GM12878 (cell line): ENCODE measurements at regions of chrX and their contacts with region 1.

Region 1: GRCh38 chrX:53422086-53422860 is at the start of gene SMC1A:
- DNase-seq: peak; percentile 97
- ATAC-seq: peak; percentile 92
- H3K4me3 ChIP-seq: peak within 1 kb of the TSS; percentile 80
- H3K27ac ChIP-seq: peak within 1 kb of the TSS; percentile 98
- H3K4me1 ChIP-seq: peaks cover 6% of the 10 kb centered on the region
- H3K27me3 ChIP-seq: no peaks in the 10 kb centered on the region
- CTCF ChIP-seq: no peak
- EP300 ChIP-seq: no peak
- POLR2A ChIP-seq: peak; percentile 87
- RAD21 ChIP-seq: no peak
- polyA plus RNA-seq, gene SMC1A: 25.6 to 29.6 TPM

Region 2: GRCh38 chrX:52504551-52504950 is 917.7 kb before region 1 on chrX:
- CTCF ChIA-PET with region 1: no interaction called
- POLR2A ChIA-PET with region 1: no interaction called
- RAD21 ChIA-PET with region 1: no interaction called
- SMC1A ChIA-PET with region 1: no interaction called
- in situ Hi-C with region 1: no loop called
- intact Hi-C with region 1: no loop called
- DNase-seq: no peak
- ATAC-seq: no peak
- H3K4me3 ChIP-seq: no peak overlapping the region
- H3K27ac ChIP-seq: no peak overlapping the region
- H3K4me1 ChIP-seq: no peaks in the 10 kb centered on the region
- H3K27me3 ChIP-seq: no peaks in the 10 kb centered on the region; a peak in 1 of 4 replicates
- CTCF ChIP-seq: no peak
- EP300 ChIP-seq: no peak
- POLR2A ChIP-seq: no peak
- RAD21 ChIP-seq: no peak

Region 3: DNA sequence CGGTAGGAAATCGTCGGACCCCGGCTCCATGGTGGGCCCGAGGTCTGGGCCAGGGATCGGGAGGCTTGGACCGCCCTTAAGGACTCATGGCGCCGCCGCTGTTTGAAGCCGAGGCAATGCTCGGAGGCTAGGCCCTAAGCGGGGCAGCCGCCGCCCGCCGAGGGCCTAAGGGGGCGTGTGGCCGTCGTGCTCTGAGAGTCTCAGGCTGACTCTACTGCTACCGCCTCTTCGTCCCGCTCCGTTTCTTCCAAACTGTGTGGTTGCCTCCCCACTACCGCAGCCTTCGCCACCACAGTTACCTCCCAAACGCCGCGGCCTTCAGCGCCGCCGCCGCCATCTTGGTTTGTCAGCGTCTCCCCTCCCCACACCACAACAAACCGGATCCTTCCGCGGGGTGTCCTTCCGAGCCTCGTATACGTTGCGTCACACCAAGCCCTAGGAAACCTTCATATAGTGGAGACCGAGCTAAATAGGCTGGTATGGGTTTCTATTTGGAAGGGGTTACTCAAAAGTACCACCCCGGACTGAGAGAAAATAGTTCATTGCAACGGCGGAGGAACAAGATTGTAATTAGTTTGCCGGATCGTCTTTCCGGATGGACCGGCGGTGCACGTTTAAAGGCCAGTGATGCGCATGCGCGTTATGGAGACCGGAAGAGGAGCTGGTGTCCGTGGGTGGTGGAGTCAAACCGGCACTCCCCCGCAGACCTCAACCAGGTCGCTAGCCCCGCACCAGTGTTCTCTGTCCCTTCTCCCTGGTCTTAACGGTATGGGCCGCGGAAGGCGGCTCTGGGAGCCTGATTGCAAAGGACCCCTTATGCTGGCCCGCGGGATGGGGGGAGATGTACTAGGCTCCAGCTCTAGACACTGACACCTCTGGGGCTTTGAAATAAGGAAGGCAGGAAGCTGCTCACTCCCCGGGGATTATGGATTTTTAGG is 197.1 kb before region 1 on chrX and contains the start of gene KDM5C:
- CTCF ChIA-PET with region 1: no interaction called
- POLR2A ChIA-PET with region 1: interaction called, 3 read pairs
- RAD21 ChIA-PET with region 1: interaction called, 6 read pairs
- SMC1A ChIA-PET with region 1: no interaction called
- in situ Hi-C with region 1: no loop called
- intact Hi-C with region 1: loop called (anchors 5 kb)
- DNase-seq: peak; percentile 79
- ATAC-seq: peak; percentile 87
- H3K4me3 ChIP-seq: peak within 1 kb of the TSS; percentile 96
- H3K27ac ChIP-seq: peak within 1 kb of the TSS; percentile 99
- H3K4me1 ChIP-seq: peaks cover 9% of the 10 kb centered on the region
- H3K27me3 ChIP-seq: no peaks in the 10 kb centered on the region
- CTCF ChIP-seq: no peak
- EP300 ChIP-seq: peak in 1 of 2 experiments; percentile 64; a peak in 2 of 4 replicates
- POLR2A ChIP-seq: peak; percentile 99
- RAD21 ChIP-seq: no peak
- polyA plus RNA-seq, gene KDM5C: 1.5 TPM

Region 4: GRCh38 chrX:53433651-53434639 is 11.7 kb after region 1 on chrX and contains the start of gene HSD17B10:
- CTCF ChIA-PET with region 1: interaction called, 48 read pairs
- POLR2A ChIA-PET with region 1: interaction called, 10 read pairs
- RAD21 ChIA-PET with region 1: interaction called, 11 read pairs
- SMC1A ChIA-PET with region 1: interaction called, 7 read pairs
- in situ Hi-C with region 1: no loop called
- intact Hi-C with region 1: loop called (anchors 1 kb)
- DNase-seq: peak; percentile 56
- ATAC-seq: peak; percentile 99
- H3K4me3 ChIP-seq: peak within 1 kb of the TSS; percentile 81
- H3K27ac ChIP-seq: peak within 1 kb of the TSS; percentile 61
- H3K4me1 ChIP-seq: peaks cover 2% of the 10 kb centered on the region; the same call in 1 of the 2 replicates
- H3K27me3 ChIP-seq: no peaks in the 10 kb centered on the region
- CTCF ChIP-seq: no peak
- EP300 ChIP-seq: no peak
- POLR2A ChIP-seq: peak; percentile 86
- RAD21 ChIP-seq: no peak
- polyA plus RNA-seq, gene HSD17B10: 43.7 to 114 TPM

Region 5: GRCh38 chrX:53445977-53446376 is 23.7 kb after region 1 on chrX:
- CTCF ChIA-PET with region 1: interaction called, 14 read pairs
- POLR2A ChIA-PET with region 1: interaction called, 4 read pairs
- RAD21 ChIA-PET with region 1: interaction called, 3 read pairs
- SMC1A ChIA-PET with region 1: interaction called, 5 read pairs
- in situ Hi-C with region 1: no loop called
- intact Hi-C with region 1: no loop called
- DNase-seq: no peak
- ATAC-seq: peak; percentile 73
- H3K4me3 ChIP-seq: no peak overlapping the region
- H3K27ac ChIP-seq: no peak overlapping the region
- H3K4me1 ChIP-seq: peaks cover 4% of the 10 kb centered on the region; the same call in 1 of the 2 replicates
- H3K27me3 ChIP-seq: no peaks in the 10 kb centered on the region
- CTCF ChIP-seq: peak; percentile 67 to 77 (median 72)
- EP300 ChIP-seq: no peak
- POLR2A ChIP-seq: no peak
- RAD21 ChIP-seq: peak; percentile 63